ENCODE measurements at regions of chr20 and their contacts with region 1.

Region 1: DNA sequence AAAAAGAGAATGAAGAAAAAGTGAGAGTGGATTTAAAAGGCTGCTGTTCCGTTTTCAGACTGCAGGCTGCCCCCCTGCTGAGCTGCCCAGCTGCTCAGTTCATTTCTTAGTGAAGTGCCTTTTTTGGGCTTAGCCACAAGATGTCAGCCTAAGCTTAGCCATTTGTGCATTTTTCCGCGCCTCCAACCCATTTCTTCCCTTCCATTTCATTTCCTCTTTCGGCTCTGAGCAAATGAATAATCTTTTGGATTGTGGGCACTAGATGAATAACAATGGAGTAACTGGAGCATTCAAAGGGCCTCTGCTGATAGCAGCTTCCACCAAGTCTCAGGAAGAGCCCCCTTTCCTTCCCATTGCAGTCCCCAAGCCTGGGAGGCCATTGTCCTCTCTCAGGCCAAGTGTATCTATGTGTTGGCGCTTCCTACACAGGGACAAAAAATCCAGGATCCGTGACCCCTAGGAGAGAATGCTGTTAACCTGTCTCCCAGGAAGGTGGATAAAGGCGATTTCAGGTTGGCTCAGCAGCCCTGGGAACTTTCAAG is 83.5 kb upstream of the SPTLC3 start:
- DNase-seq: peak in 6 of 9 donors; percentile 5 to 48 (median 20)
- ATAC-seq: peak; percentile 73
- H3K4me3 ChIP-seq: no peak overlapping the region
- H3K4me3 Mint-ChIP-seq: peak overlapping the region in 1 of 10 donors; percentile 23
- H3K27ac ChIP-seq: no peak overlapping the region
- H3K27ac Mint-ChIP-seq: no peak overlapping the region
- H3K4me1 ChIP-seq: no peaks in the 10 kb centered on the region
- H3K4me1 Mint-ChIP-seq: peaks cover 0 to 15% (median 0%) of the 10 kb centered on the region in 7 donors
- H3K27me3 ChIP-seq: peaks cover 0 to 2% of the 10 kb centered on the region in 2 donors
- H3K27me3 Mint-ChIP-seq: peaks cover 0 to 27% (median 6%) of the 10 kb centered on the region in 5 donors

Region 2: DNA sequence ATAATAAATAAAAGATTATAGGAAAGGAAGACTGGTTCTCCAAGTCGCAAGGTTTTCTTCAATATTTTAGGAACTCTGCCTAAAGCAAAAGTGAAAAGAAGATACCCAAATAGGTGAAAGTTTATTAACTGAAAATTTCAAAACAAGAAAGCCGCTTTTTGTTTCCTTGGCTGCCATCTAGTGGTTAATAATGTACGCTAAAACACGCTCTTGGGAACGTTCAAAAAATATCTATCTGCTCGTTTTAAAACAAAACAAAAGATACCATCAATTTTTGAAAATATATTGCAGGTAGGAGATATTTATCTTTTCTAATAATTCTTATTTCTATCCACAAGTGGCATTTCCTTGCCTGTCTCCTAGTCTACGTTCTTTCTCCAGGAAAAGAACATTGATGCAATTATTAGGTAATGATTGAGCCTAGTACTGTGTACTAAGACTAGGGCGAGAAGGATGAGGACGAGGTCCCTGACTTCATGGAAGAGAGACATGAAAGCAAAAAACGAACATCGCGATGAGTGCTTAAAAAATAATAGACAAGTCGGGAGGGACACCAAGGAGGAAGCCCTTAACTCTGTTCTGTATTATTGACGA is 180.7 kb after region 1 on chr20:
- CTCF ChIA-PET with region 1: no interaction called
- POLR2A ChIA-PET with region 1: no interaction called
- intact Hi-C with region 1: loop called in 1 of 2 experiments (anchors 1 kb)
- DNase-seq: peak in 5 of 9 donors; percentile 10 to 34 (median 14)
- ATAC-seq: no peak
- H3K4me3 ChIP-seq: no peak overlapping the region
- H3K4me3 Mint-ChIP-seq: no peak overlapping the region
- H3K27ac ChIP-seq: no peak overlapping the region
- H3K27ac Mint-ChIP-seq: no peak overlapping the region
- H3K4me1 ChIP-seq: no peaks in the 10 kb centered on the region
- H3K4me1 Mint-ChIP-seq: no peaks in the 10 kb centered on the region
- H3K27me3 ChIP-seq: no peaks in the 10 kb centered on the region
- H3K27me3 Mint-ChIP-seq: peaks cover 0 to 6% (median 5%) of the 10 kb centered on the region in 5 donors

Region 3: GRCh38 chr20:13322621-13323020 is 397.3 kb after region 1 on chr20:
- CTCF ChIA-PET with region 1: no interaction called
- POLR2A ChIA-PET with region 1: no interaction called
- intact Hi-C with region 1: no loop called
- DNase-seq: no peak
- ATAC-seq: no peak
- H3K4me3 ChIP-seq: no peak overlapping the region
- H3K4me3 Mint-ChIP-seq: no peak overlapping the region
- H3K27ac ChIP-seq: no peak overlapping the region
- H3K27ac Mint-ChIP-seq: peak overlapping the region in 1 of 9 donors; percentile 1
- H3K4me1 ChIP-seq: no peaks in the 10 kb centered on the region
- H3K4me1 Mint-ChIP-seq: peaks cover 4 to 11% (median 7%) of the 10 kb centered on the region in 7 donors
- H3K27me3 ChIP-seq: no peaks in the 10 kb centered on the region
- H3K27me3 Mint-ChIP-seq: peaks cover under 1 to 21% (median 10%) of the 10 kb centered on the region in 5 donors

Region 4: GRCh38 chr20:13546497-13547131 is 621.3 kb after region 1 on chr20:
- CTCF ChIA-PET with region 1: interaction called, 6 read pairs
- POLR2A ChIA-PET with region 1: no interaction called
- intact Hi-C with region 1: loop called (anchors 5 kb)
- DNase-seq: peak; percentile 10 to 72 (median 44)
- ATAC-seq: peak; percentile 64
- H3K4me3 ChIP-seq: no peak overlapping the region
- H3K4me3 Mint-ChIP-seq: no peak overlapping the region
- H3K27ac ChIP-seq: no peak overlapping the region
- H3K27ac Mint-ChIP-seq: no peak overlapping the region
- H3K4me1 ChIP-seq: no peaks in the 10 kb centered on the region
- H3K4me1 Mint-ChIP-seq: peaks cover 0 to 4% (median 0%) of the 10 kb centered on the region in 7 donors
- H3K27me3 ChIP-seq: no peaks in the 10 kb centered on the region
- H3K27me3 Mint-ChIP-seq: no peaks in the 10 kb centered on the region

Measured in naive thymus-derived CD4-positive, alpha-beta T cell (primary cell).